ENCODE measurements at regions of chr6 and their contacts with region 1.

Region 1: GRCh38 chr6:21742238-21742660 is 148.7 kb downstream of the SOX4 start:
- DNase-seq: peak; percentile 94
- H3K4me3 ChIP-seq: no peak overlapping the region
- H3K27ac ChIP-seq: peak overlapping the region; percentile 6
- H3K4me1 ChIP-seq: peaks cover 32% of the 10 kb centered on the region
- H3K27me3 ChIP-seq: peaks cover 28% of the 10 kb centered on the region
- CTCF ChIP-seq: no peak

Region 2: GRCh38 chr6:20202324-20202658 is 1540.0 kb before region 1 on chr6:
- CTCF ChIA-PET with region 1: no interaction called
- POLR2A ChIA-PET with region 1: no interaction called
- intact Hi-C with region 1: no loop called
- DNase-seq: no peak
- H3K4me3 ChIP-seq: no peak overlapping the region
- H3K27ac ChIP-seq: no peak overlapping the region
- H3K4me1 ChIP-seq: peaks cover 7% of the 10 kb centered on the region
- H3K27me3 ChIP-seq: no peaks in the 10 kb centered on the region
- CTCF ChIP-seq: no peak

Region 3: GRCh38 chr6:21826023-21826422 is 83.8 kb after region 1 on chr6:
- CTCF ChIA-PET with region 1: no interaction called
- POLR2A ChIA-PET with region 1: no interaction called
- intact Hi-C with region 1: loop called (anchors 2 kb)
- DNase-seq: no peak
- H3K4me3 ChIP-seq: no peak overlapping the region
- H3K27ac ChIP-seq: no peak overlapping the region
- H3K4me1 ChIP-seq: peaks cover 15% of the 10 kb centered on the region
- H3K27me3 ChIP-seq: peaks cover 50% of the 10 kb centered on the region
- CTCF ChIP-seq: no peak

Region 4: DNA sequence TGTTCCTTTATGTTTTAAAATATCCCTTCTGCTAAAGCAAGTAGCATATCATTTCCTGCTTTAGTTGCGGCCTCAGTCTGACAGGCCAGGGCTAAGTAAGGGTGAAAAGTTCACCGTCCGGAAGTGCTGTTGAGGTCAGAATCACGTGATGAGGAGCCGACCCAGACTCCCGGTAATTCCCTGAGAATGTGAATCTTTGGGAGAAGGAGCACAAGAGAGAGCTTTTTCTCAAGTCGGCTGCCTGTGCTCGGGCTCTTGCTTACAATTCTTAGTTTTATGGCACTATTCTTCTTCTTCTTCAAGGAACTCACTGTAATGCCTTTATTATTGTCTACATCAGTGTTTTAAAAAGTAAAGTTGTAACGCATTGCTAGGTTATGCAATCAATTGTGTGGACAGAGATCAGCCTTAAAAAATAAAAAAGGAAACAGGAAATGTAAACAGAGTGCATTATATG is 245.3 kb after region 1 on chr6:
- CTCF ChIA-PET with region 1: no interaction called
- POLR2A ChIA-PET with region 1: no interaction called
- intact Hi-C with region 1: no loop called
- DNase-seq: peak; percentile 51
- H3K4me3 ChIP-seq: no peak overlapping the region
- H3K27ac ChIP-seq: no peak overlapping the region
- H3K4me1 ChIP-seq: peaks cover 33% of the 10 kb centered on the region
- H3K27me3 ChIP-seq: no peaks in the 10 kb centered on the region
- CTCF ChIP-seq: no peak